ENCODE measurements at regions of chr1 and their contacts with region 1.

Region 1: GRCh38 chr1:43147553-43148319 is 24.4 kb downstream of the EBNA1BP2 start:
- DNase-seq: peak; percentile 74
- ATAC-seq: peak; percentile 86
- H3K4me3 Mint-ChIP-seq: no peak overlapping the region
- H3K27ac Mint-ChIP-seq: no peak overlapping the region
- H3K4me1 Mint-ChIP-seq: peaks cover 7% of the 10 kb centered on the region
- H3K27me3 Mint-ChIP-seq: peaks cover 57% of the 10 kb centered on the region

Region 2: DNA sequence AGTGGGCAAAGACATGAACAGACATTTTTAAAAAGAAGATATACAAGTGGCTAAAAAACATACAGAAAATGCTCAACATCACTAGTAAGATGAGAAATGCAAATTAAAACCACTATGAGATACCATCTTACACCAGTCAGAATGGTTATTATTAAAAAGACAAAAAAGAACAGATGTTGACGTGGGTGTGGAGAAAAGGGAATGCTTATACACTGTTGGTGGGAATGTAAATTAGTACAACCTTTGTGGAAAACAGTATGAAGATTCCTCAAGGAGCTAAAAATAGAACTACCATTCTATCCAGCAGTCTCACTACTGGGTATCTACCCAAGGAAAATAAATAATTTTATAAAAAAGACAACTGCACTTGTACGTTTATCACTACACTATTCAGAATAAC is 49.5 kb before region 1 on chr1:
- CTCF ChIA-PET with region 1: no interaction called
- POLR2A ChIA-PET with region 1: no interaction called
- intact Hi-C with region 1: loop called in 1 of 2 experiments (anchors 5 kb)
- DNase-seq: no peak
- ATAC-seq: no peak
- H3K4me3 Mint-ChIP-seq: no peak overlapping the region
- H3K27ac Mint-ChIP-seq: no peak overlapping the region
- H3K4me1 Mint-ChIP-seq: no peaks in the 10 kb centered on the region
- H3K27me3 Mint-ChIP-seq: peaks cover 2% of the 10 kb centered on the region

Region 3: DNA sequence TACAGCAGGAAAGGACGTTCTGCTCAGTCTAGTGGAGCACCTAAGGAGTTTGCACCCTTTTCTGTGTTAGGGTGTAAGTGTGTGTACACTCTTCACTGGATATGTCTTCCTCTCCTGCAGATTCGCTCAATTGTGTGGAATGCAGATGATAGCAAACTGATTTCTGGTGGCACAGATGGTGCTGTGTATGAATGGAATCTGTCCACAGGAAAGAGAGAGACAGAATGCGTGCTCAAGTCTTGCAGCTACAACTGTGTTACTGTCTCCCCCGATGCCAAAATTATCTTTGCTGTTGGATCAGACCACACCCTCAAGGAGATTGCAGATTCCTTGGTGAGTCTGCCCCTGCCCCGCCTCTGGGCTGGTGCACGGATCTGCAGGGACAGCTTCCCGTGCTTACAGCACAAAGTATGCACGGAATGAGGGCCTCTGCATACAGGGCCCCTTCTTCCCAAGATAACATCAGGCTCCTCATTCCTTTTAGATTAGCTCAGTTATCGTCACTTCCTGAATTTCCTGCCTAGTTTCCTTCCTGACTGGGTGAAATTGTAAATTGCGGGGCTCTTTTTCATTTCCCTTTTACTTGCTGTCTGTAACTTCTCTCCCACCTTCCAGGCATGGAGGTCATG is 59.0 kb after region 1 on chr1:
- CTCF ChIA-PET with region 1: no interaction called
- POLR2A ChIA-PET with region 1: no interaction called
- intact Hi-C with region 1: no loop called
- DNase-seq: no peak
- ATAC-seq: no peak
- H3K4me3 Mint-ChIP-seq: no peak overlapping the region
- H3K27ac Mint-ChIP-seq: no peak overlapping the region
- H3K4me1 Mint-ChIP-seq: no peaks in the 10 kb centered on the region
- H3K27me3 Mint-ChIP-seq: peaks cover 8% of the 10 kb centered on the region